ENCODE measurements at regions of chr16 and their contacts with region 1.

Region 1: GRCh38 chr16:85717393-85718121 is 28.8 kb upstream of the GINS2 start:
- DNase-seq: peak; percentile 70
- H3K4me3 ChIP-seq: no peak overlapping the region
- H3K27ac ChIP-seq: no peak overlapping the region
- H3K4me1 ChIP-seq: peaks cover 23% of the 10 kb centered on the region
- H3K27me3 ChIP-seq: no peaks in the 10 kb centered on the region
- CTCF ChIP-seq: peak; percentile 80

Region 2: DNA sequence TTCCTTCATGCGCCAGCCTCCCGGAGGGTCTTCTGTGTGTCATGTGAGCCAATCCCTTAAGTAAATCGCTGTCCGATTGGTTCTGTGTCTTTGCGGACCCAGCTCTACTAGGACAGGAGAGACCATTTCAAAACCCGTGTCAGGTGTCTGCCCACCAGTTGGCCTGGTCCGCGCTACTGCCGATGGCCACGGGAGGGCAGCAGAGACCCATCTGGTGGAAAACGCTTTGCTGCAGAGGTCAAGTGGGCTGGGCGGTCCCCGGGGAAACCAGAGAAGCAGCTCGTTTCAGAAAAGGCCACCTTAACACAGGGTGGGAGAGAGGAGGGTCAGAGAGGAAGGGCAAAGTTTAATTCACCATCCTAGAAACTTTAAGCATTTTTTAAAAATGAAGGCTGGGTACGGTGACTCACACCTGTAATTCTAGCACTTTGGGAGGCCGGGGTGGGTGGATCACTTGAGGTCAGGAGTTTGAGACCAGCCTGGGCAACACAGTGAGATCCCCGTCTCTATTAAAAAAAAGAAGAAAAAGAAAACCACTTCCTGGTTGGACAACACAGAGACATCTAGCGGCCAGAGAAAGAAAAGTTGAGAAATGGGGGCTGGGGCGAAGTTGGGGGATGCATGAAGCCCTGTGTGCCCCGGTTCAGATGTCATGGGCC is 602.5 kb before region 1 on chr16:
- CTCF ChIA-PET with region 1: no interaction called
- POLR2A ChIA-PET with region 1: no interaction called
- intact Hi-C with region 1: loop called (anchors 10 kb)
- DNase-seq: peak; percentile 83
- H3K4me3 ChIP-seq: peak overlapping the region; percentile 18
- H3K27ac ChIP-seq: peak overlapping the region; percentile 55
- H3K4me1 ChIP-seq: peaks cover 4% of the 10 kb centered on the region
- H3K27me3 ChIP-seq: no peaks in the 10 kb centered on the region
- CTCF ChIP-seq: peak; percentile 98

Region 3: GRCh38 chr16:85275533-85276249 is 441.9 kb before region 1 on chr16:
- CTCF ChIA-PET with region 1: no interaction called
- POLR2A ChIA-PET with region 1: no interaction called
- intact Hi-C with region 1: loop called (anchors 5 kb)
- DNase-seq: peak; percentile 74
- H3K4me3 ChIP-seq: no peak overlapping the region
- H3K27ac ChIP-seq: no peak overlapping the region
- H3K4me1 ChIP-seq: no peaks in the 10 kb centered on the region
- H3K27me3 ChIP-seq: no peaks in the 10 kb centered on the region
- CTCF ChIP-seq: peak; percentile 95

Region 4: GRCh38 chr16:85302018-85302849 is 415.3 kb before region 1 on chr16:
- CTCF ChIA-PET with region 1: interaction called, 14 read pairs
- POLR2A ChIA-PET with region 1: no interaction called
- intact Hi-C with region 1: no loop called
- DNase-seq: peak; percentile 31
- H3K4me3 ChIP-seq: no peak overlapping the region
- H3K27ac ChIP-seq: peak overlapping the region; percentile 16
- H3K4me1 ChIP-seq: peaks cover 18% of the 10 kb centered on the region
- H3K27me3 ChIP-seq: no peaks in the 10 kb centered on the region
- CTCF ChIP-seq: no peak

Region 5: DNA sequence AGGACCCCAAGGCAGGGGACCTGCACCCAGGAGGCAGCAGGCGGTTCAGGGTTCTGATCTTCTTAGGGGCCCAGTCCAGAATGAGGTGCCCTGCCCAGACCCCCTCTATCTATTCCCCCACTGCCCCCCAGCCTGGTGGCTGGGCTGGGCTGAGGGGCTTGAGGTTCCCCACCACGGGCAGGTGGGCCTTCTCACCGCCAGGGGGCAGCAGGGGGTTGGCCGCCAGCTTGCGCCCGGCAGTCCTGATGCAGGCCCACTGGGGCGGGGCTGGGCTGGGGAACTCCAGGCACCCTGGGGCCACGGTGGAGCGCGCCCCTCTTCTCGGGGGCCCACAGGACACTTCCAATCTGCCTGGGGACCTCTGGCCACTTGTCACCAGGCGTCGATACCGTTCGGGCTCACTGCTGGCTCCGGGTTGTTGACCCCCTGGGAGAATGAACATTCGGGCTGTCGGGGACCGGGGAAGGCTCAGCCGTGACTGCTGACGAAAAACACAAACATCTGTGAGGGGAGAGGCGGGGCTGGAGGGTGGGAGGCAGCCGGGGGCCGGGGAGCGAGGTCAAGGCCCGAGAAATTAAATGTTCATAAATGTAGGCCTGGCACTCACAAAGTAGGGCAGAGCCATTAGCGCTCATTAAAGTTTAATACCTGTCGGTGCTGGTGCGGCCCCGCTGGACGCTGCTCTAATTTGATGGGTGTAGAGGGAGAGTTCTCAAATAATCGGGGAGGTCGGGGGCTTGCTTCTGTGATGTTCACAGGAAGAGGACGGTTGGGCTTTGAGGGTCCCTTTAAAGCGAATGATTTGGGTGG is 323.7 kb before region 1 on chr16:
- CTCF ChIA-PET with region 1: no interaction called
- POLR2A ChIA-PET with region 1: no interaction called
- intact Hi-C with region 1: loop called (anchors 5 kb)
- DNase-seq: peak; percentile 75
- H3K4me3 ChIP-seq: no peak overlapping the region
- H3K27ac ChIP-seq: no peak overlapping the region
- H3K4me1 ChIP-seq: peaks cover 43% of the 10 kb centered on the region
- H3K27me3 ChIP-seq: no peaks in the 10 kb centered on the region
- CTCF ChIP-seq: peak; percentile 96

Region 6: DNA sequence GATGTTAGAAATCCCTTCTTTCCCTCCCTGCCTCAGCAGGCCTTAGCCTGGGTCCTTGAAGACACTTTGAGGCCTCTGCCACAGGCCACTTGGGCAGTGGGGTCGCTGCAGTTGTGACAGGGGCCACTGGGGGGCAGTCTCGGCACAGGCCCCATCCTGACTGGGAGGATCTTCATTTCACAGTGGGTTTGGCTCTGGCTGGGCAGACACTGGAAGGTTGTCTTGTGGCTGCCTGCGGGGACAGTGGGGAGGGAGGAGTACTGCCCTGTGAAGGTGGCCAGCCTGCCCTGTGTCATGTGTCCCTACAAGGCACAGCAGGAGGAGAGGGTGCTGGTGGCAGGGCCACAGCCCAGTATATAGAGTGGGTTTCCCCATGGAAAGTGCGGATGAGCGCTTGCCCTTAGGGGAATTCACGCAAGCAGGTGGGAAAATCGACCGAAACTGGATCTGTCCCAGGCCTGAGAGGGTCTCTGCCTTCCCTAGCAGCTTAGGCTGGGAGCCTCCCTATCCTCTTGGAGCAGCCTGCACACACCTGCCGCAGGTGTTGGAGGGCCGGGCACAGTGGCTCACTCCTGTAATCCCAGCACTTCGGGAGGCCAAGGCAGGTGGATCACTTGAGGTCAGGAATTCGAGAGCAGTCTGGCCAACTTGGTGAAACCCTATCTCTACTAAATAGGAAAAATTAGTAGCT is 57.6 kb before region 1 on chr16:
- CTCF ChIA-PET with region 1: no interaction called
- POLR2A ChIA-PET with region 1: no interaction called
- intact Hi-C with region 1: loop called (anchors 1 kb)
- DNase-seq: peak; percentile 72
- H3K4me3 ChIP-seq: no peak overlapping the region
- H3K27ac ChIP-seq: no peak overlapping the region
- H3K4me1 ChIP-seq: peaks cover 16% of the 10 kb centered on the region
- H3K27me3 ChIP-seq: no peaks in the 10 kb centered on the region
- CTCF ChIP-seq: peak; percentile 98

Region 7: DNA sequence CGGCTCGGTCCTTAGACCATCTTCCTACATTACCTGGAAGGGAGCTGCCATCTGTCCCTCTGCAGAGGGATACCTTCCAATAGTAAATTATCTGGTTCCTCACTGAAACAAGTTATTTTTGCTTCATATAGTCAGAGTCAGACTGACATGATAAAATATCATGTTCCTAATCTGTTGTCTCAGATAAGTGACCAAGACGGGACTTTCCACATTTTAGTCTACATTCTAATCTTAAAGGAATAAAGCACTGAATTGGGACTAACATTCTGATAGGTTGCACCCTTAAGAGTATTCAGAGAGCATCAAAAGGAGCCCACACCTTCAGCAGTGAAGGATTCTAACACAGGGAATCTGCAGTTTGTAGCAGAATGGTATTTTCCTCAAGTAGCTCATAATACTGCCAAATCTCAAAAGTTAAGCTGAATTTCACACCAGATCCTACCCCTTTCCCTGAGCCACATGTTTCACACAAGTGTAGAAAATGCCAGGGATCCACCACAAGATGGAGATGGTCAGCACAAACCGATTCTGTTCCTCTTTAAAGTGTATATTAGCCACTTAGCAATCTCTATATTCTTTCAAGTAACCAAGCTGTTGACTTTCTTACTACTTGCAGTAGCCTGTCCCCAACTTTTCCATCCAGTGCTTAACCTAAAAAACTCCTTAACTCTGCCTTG is 42.2 kb before region 1 on chr16:
- CTCF ChIA-PET with region 1: no interaction called
- POLR2A ChIA-PET with region 1: no interaction called
- intact Hi-C with region 1: loop called (anchors 1 kb)
- DNase-seq: peak; percentile 48
- H3K4me3 ChIP-seq: no peak overlapping the region
- H3K27ac ChIP-seq: no peak overlapping the region
- H3K4me1 ChIP-seq: peaks cover 15% of the 10 kb centered on the region
- H3K27me3 ChIP-seq: no peaks in the 10 kb centered on the region
- CTCF ChIP-seq: peak; percentile 56

Region 8: GRCh38 chr16:85777583-85778298 is 60.2 kb after region 1 on chr16:
- CTCF ChIA-PET with region 1: no interaction called
- POLR2A ChIA-PET with region 1: no interaction called
- intact Hi-C with region 1: no loop called
- DNase-seq: no peak
- H3K4me3 ChIP-seq: no peak overlapping the region
- H3K27ac ChIP-seq: no peak overlapping the region
- H3K4me1 ChIP-seq: no peaks in the 10 kb centered on the region
- H3K27me3 ChIP-seq: no peaks in the 10 kb centered on the region
- CTCF ChIP-seq: no peak

Measured in A673 (cell line).